GM12878 (cell line): ENCODE measurements at regions of chr20 and their contacts with region 1.

Region 1: DNA sequence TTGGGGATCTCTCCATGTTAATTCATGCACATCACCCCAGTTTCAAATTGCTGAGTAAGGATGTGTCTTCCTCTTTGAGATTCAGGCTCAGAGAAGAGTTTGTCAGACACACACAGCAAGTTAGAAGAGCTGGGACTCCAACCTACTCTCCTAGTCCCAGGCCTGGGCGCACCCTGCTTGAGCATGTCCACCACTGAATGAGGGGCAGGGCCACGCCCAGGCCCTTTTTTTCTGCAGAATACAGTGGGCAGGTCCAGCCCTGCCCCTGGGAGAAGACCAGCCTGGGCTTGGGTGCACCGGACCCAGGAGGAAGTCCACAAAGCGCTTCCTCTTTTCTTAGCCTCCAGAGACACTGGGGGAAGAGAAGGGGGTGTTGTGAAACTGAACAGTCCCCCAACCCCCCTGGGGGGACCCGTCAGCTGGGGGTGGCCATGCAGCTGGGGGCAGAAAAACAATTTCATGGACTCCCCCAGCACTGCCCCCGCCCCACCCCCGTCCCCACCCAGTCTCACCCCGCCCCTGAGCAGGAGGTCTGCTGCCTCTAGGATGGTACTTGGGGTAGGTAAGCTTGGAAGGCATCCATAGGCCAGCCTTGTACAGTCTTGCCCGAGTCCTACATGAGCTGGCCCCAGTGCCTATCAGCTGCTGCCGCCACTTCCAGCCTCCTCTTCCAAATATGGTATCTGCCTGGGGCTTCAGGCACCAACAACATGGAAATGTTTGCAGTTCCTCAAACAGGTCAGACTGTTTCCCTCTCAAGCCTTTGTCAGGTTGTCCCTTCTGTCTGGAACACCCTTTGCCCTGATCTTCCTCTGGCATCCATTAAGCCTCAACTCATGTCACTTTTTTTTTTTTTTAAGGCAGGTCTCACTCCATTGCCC is 11.7 kb upstream of the HCK start:
- DNase-seq: no peak
- ATAC-seq: peak; percentile 86
- H3K4me3 ChIP-seq: peak overlapping the region; percentile 53
- H3K27ac ChIP-seq: peak overlapping the region; percentile 48
- H3K4me1 ChIP-seq: peaks cover 14% of the 10 kb centered on the region
- H3K27me3 ChIP-seq: no peaks in the 10 kb centered on the region
- CTCF ChIP-seq: no peak
- EP300 ChIP-seq: no peak; a peak in 1 of 4 replicates
- POLR2A ChIP-seq: no peak
- RAD21 ChIP-seq: no peak

Region 2: DNA sequence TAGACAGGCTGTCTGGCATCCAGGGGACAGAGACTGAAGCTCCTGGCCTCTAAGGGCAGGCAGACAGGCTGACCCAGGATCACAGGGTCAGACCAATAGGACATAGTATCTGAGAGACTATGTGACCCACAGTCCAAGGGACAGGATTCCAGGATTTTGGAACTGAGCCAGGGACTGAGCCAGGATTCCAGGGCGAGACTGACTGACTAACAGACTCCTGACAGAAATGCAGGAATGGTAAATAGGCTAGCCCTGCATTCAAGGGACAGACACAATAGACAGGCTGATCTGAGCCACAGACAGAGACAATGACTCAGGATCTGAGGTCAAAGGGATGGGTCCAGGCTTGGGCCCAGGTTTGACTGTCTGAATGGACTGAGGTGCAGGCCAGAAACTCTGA is 52.6 kb before region 1 on chr20:
- CTCF ChIA-PET with region 1: no interaction called
- POLR2A ChIA-PET with region 1: no interaction called
- RAD21 ChIA-PET with region 1: no interaction called
- SMC1A ChIA-PET with region 1: no interaction called
- in situ Hi-C with region 1: no loop called
- intact Hi-C with region 1: no loop called
- DNase-seq: no peak
- ATAC-seq: no peak
- H3K4me3 ChIP-seq: no peak overlapping the region
- H3K27ac ChIP-seq: no peak overlapping the region
- H3K4me1 ChIP-seq: no peaks in the 10 kb centered on the region
- H3K27me3 ChIP-seq: no peaks in the 10 kb centered on the region; a peak in 2 of 4 replicates
- CTCF ChIP-seq: no peak
- EP300 ChIP-seq: no peak
- POLR2A ChIP-seq: no peak
- RAD21 ChIP-seq: no peak

Region 3: DNA sequence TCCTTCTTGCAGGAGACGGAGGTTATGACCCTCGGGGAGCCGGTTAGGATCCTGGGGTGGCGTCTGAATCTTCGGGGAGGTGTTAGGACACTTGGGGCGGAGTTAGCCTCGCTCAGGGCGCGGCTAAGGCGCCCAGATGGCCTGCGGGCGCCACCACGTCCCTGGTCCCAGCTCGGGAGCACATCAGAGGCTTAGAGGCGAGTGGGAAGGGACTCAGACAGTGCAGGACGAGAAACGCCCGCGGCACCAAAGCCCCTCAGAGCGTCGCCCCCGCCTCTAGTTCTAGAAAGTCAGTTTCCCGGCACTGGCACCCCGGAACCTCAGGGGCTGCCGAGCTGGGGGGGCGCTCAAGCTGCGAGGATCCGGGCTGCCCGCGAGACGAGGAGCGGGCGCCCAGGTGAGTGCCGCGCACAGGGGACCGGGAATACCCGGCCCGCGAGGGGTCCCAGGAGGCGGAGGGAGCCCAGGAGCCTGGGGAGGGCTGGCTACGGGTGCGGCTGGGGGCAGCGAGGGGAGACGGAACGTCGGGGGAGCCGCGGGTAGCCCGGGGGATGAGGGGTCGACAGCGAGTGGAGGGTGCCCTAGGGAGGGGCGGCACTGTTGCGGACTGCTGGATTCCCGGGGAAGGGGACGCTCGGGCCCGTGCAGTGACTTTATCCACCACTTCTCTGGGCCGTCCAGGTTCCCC is 11.9 kb after region 1 on chr20 and contains the start of gene HCK:
- CTCF ChIA-PET with region 1: interaction called, 106 read pairs
- POLR2A ChIA-PET with region 1: interaction called, 22 read pairs
- RAD21 ChIA-PET with region 1: interaction called, 215 read pairs
- SMC1A ChIA-PET with region 1: interaction called, 42 read pairs
- in situ Hi-C with region 1: no loop called
- intact Hi-C with region 1: no loop called
- DNase-seq: no peak
- ATAC-seq: peak; percentile 85
- H3K4me3 ChIP-seq: peak within 1 kb of the TSS; percentile 88
- H3K27ac ChIP-seq: peak within 1 kb of the TSS; percentile 64
- H3K4me1 ChIP-seq: peaks cover 15% of the 10 kb centered on the region
- H3K27me3 ChIP-seq: peaks cover 3 to 7% of the 10 kb centered on the region in 2 experiments
- CTCF ChIP-seq: peak in 1 of 3 experiments; percentile 5; a peak in 1 of 6 replicates
- EP300 ChIP-seq: no peak
- POLR2A ChIP-seq: peak; percentile 55; the same call in 1 of the 2 replicates
- RAD21 ChIP-seq: no peak
- polyA plus RNA-seq, gene HCK: 1.3 to 2.1 TPM

Region 4: DNA sequence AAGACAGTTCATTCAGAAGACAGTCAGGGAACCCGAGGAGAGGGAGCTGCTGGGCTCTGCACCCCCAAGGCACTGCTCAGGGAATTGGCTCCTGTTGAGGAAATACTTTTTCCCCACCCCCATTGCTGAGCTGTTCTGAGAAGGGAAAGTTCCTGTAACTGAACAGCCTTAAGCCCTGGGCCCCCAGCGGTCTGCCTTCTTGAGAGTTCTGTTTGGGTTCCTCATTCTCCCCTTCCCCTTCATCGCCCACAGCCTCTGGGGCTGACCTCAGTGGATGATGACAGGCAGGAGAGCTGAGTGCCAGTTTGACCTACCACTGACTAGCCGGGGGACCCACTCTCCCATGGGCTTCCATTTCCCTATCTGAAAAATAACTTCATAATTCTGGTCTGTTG is 22.4 kb after region 1 on chr20:
- CTCF ChIA-PET with region 1: interaction called, 106 read pairs
- POLR2A ChIA-PET with region 1: interaction called, 39 read pairs
- RAD21 ChIA-PET with region 1: interaction called, 215 read pairs
- SMC1A ChIA-PET with region 1: interaction called, 108 read pairs
- in situ Hi-C with region 1: no loop called
- intact Hi-C with region 1: loop called (anchors 2 kb)
- DNase-seq: peak; percentile 55
- ATAC-seq: peak; percentile 79
- H3K4me3 ChIP-seq: 0 out of 2 replicates have a peak overlapping the region, but pooled peaks have one; percentile 12
- H3K27ac ChIP-seq: peak overlapping the region; percentile 51
- H3K4me1 ChIP-seq: peaks cover 36% of the 10 kb centered on the region
- H3K27me3 ChIP-seq: no peaks in the 10 kb centered on the region
- CTCF ChIP-seq: no peak
- EP300 ChIP-seq: 0 out of 4 replicates have a peak, but pooled peaks of 1 of the 2 experiments have one; percentile 32
- POLR2A ChIP-seq: no peak
- RAD21 ChIP-seq: no peak

Region 5: GRCh38 chr20:33181482-33182093 is 1141.2 kb after region 1 on chr20:
- CTCF ChIA-PET with region 1: no interaction called
- POLR2A ChIA-PET with region 1: no interaction called
- RAD21 ChIA-PET with region 1: no interaction called
- SMC1A ChIA-PET with region 1: no interaction called
- in situ Hi-C with region 1: no loop called
- intact Hi-C with region 1: no loop called
- DNase-seq: no peak
- ATAC-seq: no peak
- H3K4me3 ChIP-seq: no peak overlapping the region
- H3K27ac ChIP-seq: no peak overlapping the region
- H3K4me1 ChIP-seq: no peaks in the 10 kb centered on the region
- H3K27me3 ChIP-seq: no peaks in the 10 kb centered on the region; a peak in 1 of 4 replicates
- CTCF ChIP-seq: no peak
- EP300 ChIP-seq: no peak
- POLR2A ChIP-seq: no peak
- RAD21 ChIP-seq: no peak